HepG2 (cell line): ENCODE measurements at regions of chr6 and their contacts with region 1.

Region 1: DNA sequence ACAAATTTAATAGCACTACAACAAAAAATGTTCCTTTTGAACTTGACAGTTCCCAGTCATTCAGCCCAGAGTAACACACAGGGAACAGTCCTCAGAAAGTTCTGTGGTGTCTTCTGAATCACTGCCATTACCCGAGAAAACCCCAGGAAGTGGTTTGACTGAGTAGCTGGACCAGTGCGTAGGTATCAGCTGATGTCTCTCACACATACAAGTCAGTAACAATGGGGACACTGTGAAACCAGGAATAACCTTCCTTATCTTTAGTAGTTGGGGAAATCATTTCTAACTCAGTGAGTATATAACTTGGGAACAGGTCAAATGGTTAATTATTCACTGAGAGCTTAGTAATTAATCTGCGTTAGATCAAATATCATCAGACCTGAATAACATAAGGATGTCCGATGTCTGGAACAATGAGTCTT is 73.1 kb downstream of the HIVEP2 start:
- DNase-seq: peak; percentile 83
- ATAC-seq: peak; percentile 49
- H3K4me3 ChIP-seq: no peak overlapping the region
- H3K27ac ChIP-seq: no peak overlapping the region
- H3K4me1 ChIP-seq: peaks cover 68% of the 10 kb centered on the region
- H3K27me3 ChIP-seq: no peaks in the 10 kb centered on the region
- CTCF ChIP-seq: no peak
- EP300 ChIP-seq: peak in 1 of 2 experiments; percentile 49; a peak in 1 of 4 replicates
- POLR2A ChIP-seq: no peak
- RAD21 ChIP-seq: no peak

Region 2: DNA sequence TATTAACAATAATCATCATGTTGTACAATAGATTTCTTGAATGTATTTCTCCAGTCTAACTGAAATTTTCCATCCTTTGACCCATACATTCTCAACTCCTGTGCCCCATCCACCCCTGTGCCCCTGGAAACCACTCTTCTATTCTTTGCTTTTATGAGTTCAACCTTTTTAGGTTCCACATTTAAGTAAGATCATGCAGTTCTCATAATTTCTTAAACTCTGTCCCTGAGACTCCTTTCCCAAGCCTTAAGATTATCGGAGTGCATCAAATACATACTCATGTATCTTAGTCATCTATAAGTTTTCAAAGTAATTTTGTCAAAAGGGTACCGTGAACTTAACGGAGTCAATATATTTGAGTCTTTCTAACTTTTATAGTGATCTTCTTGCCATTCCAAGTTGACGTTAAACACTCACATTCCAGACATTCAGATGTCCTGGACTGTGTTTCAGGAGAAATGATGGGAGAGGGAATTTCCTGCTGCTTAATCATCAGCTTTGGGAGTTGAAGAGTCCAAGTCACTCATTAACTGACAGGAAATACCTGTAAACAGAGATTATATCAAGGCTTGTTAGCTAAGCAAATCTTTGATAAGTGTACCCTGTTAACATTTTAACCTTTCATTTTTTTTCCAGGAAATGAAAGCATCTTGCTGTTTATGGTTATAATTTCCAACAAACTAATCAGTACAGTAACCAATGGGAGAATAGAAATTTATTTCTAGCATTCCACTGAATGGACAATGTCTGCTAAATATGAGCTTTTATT is 496.8 kb before region 1 on chr6:
- CTCF ChIA-PET with region 1: no interaction called
- POLR2A ChIA-PET with region 1: no interaction called
- in situ Hi-C with region 1: no loop called
- intact Hi-C with region 1: no loop called
- DNase-seq: peak; percentile 99
- ATAC-seq: peak; percentile 90
- H3K4me3 ChIP-seq: peak overlapping the region; percentile 6 to 40 (median 16); a peak in 4 of 6 replicates
- H3K27ac ChIP-seq: peak overlapping the region; percentile 74
- H3K4me1 ChIP-seq: peaks cover 91% of the 10 kb centered on the region
- H3K27me3 ChIP-seq: no peaks in the 10 kb centered on the region
- CTCF ChIP-seq: no peak
- EP300 ChIP-seq: peak in 1 of 2 experiments; percentile 100; a peak in 2 of 4 replicates
- POLR2A ChIP-seq: peak in 1 of 2 experiments; percentile 54; a peak in 1 of 4 replicates
- RAD21 ChIP-seq: no peak; the same call in 1 of the 2 replicates

Region 3: DNA sequence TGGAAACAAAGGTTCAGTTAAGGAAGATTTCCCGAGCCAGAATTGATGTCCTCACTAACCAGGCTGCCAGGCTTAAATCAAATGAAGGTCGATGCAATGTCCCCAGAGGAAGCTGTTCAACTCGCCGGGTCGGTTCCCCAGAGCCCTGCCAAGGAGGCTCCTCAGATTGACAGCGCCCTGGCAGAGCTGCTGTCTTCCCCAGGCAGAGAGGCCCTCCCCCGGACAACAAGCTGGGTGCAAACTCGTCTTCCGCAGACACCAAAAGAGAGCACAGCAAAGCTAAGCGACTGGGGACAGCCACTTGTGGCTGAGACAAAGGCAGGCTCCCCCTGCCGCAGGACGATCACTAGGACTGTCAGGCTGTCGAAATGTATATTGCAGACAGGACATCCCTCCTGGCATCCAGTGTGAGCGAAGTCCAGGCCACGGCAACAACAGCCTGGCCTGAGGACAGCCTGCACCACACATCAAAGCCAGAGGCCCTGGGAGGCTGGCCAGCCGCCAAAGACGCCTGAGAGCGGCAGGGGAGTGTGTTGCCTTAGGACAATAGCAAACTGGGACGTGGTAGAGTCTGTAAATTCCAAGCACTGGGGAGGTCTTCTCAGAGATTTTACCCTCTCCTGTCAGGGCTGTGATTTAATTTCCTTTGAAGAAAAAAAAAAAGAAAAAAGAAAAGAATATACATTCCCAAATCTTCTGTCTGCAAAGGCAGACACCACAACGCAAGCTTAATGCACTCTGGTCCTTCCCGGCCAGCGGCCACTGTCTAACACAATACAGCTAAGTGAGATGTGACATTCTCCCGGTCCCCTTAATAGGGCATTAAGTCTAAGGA is 26.1 kb before region 1 on chr6:
- CTCF ChIA-PET with region 1: no interaction called
- POLR2A ChIA-PET with region 1: interaction called, 4 read pairs
- in situ Hi-C with region 1: no loop called
- intact Hi-C with region 1: loop called (anchors 1 kb)
- DNase-seq: peak; percentile 99
- ATAC-seq: peak; percentile 100
- H3K4me3 ChIP-seq: peak overlapping the region; percentile 50 to 72 (median 71)
- H3K27ac ChIP-seq: peak overlapping the region; percentile 91
- H3K4me1 ChIP-seq: peaks cover 54% of the 10 kb centered on the region
- H3K27me3 ChIP-seq: no peaks in the 10 kb centered on the region
- CTCF ChIP-seq: peak; percentile 79
- EP300 ChIP-seq: peak; percentile 71 to 88; a peak in 3 of 4 replicates
- POLR2A ChIP-seq: peak; percentile 65 to 95
- RAD21 ChIP-seq: peak; percentile 90

Region 4: DNA sequence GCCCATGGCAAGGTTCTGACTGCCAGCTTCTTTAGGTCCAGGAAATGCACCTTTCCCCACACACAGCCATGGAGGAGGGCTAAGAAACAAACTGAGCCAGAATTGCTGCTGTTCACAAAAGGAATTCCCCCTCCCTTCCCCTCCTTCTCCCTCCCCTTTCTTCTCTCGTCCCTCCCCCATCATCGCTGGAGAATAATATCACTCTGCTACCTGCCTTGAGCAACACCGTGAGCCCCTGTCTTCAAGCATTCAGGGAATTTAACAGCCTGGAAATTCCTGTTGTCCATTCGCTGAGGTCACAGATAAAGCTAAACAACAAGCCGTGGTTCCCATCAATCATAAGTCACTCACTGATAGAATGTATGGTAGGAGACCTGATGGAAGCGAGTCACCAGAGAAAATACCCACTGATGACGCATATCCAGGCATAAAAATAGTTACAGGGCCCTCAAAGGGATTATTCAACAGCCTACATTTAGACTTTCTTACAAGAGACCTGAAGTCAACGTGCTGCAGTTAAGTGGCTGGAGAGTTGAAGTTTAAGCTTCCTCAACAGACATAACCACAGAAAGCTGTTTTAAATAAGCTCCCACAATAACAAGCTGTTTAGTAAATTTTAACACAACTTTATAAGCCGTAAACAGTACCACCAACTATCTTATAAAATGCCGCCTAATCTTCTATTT is 13.4 kb after region 1 on chr6:
- CTCF ChIA-PET with region 1: no interaction called
- POLR2A ChIA-PET with region 1: no interaction called
- in situ Hi-C with region 1: no loop called
- intact Hi-C with region 1: loop called (anchors 2 kb)
- DNase-seq: peak; percentile 84
- ATAC-seq: peak; percentile 60
- H3K4me3 ChIP-seq: no peak overlapping the region
- H3K27ac ChIP-seq: no peak overlapping the region
- H3K4me1 ChIP-seq: peaks cover 27% of the 10 kb centered on the region
- H3K27me3 ChIP-seq: no peaks in the 10 kb centered on the region
- CTCF ChIP-seq: no peak
- EP300 ChIP-seq: no peak
- POLR2A ChIP-seq: no peak
- RAD21 ChIP-seq: no peak

Region 5: GRCh38 chr6:142902636-142903053 is 30.7 kb after region 1 on chr6:
- CTCF ChIA-PET with region 1: no interaction called
- POLR2A ChIA-PET with region 1: no interaction called
- in situ Hi-C with region 1: no loop called
- intact Hi-C with region 1: loop called (anchors 2 kb)
- DNase-seq: peak; percentile 85
- ATAC-seq: peak; percentile 90
- H3K4me3 ChIP-seq: no peak overlapping the region
- H3K27ac ChIP-seq: no peak overlapping the region
- H3K4me1 ChIP-seq: peaks cover 16% of the 10 kb centered on the region
- H3K27me3 ChIP-seq: no peaks in the 10 kb centered on the region
- CTCF ChIP-seq: no peak
- EP300 ChIP-seq: 0 out of 4 replicates have a peak, but pooled peaks of 1 of the 2 experiments have one; percentile 15
- POLR2A ChIP-seq: no peak
- RAD21 ChIP-seq: no peak

Region 6: GRCh38 chr6:142926494-142927270 is 54.8 kb after region 1 on chr6:
- CTCF ChIA-PET with region 1: no interaction called
- POLR2A ChIA-PET with region 1: interaction called, 10 read pairs
- in situ Hi-C with region 1: no loop called
- intact Hi-C with region 1: loop called (anchors 1 kb)
- DNase-seq: peak; percentile 93
- ATAC-seq: peak; percentile 97
- H3K4me3 ChIP-seq: peak overlapping the region; percentile 84 to 99 (median 93)
- H3K27ac ChIP-seq: peak overlapping the region; percentile 99
- H3K4me1 ChIP-seq: peaks cover 38% of the 10 kb centered on the region
- H3K27me3 ChIP-seq: no peaks in the 10 kb centered on the region; a peak in 1 of 5 replicates
- CTCF ChIP-seq: no peak
- EP300 ChIP-seq: peak; percentile 57 to 85; a peak in 3 of 4 replicates
- POLR2A ChIP-seq: peak; percentile 84 to 93; a peak in 3 of 4 replicates
- RAD21 ChIP-seq: peak; percentile 83